ENCODE measurements at regions of chr15 and their contacts with region 1.

Region 1: DNA sequence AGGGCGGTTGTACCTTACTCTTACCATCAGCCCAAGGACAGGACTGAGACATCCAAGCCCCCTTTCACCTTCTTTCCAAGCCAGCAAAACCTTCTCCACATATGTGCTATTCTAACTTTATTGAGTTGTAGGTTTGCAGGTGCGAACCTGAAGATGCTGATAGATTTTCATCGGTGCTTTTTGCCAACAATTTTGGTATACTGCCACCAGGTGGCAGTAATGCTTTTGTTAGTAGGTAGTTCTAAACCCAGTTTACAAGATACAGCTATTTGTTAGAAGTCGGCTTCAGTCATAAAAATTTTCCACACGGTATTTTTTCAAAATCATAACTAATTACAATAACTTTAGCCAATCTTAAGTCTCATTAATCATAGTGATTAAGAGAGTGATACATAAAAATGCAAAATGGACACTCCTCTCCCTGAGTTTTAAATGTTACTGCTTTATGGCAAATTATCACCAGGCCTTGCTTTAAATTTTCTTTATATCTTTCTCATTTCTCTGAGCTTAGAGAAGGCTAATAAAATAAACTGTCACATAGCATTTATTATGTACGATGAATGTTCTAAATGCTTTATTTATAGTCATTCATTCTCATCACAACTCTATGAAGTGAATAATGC is 636 bp downstream of the TBC1D21 start:
- DNase-seq: peak; percentile 68
- ATAC-seq: 0 out of 2 replicates have a peak, but pooled peaks have one; percentile 27
- H3K4me3 ChIP-seq: no peak overlapping the region
- H3K27ac ChIP-seq: no peak overlapping the region
- H3K4me1 ChIP-seq: no peaks in the 10 kb centered on the region
- H3K27me3 ChIP-seq: peaks cover 53% of the 10 kb centered on the region
- CTCF ChIP-seq: peak; percentile 78
- POLR2A ChIP-seq: no peak
- RAD21 ChIP-seq: peak; percentile 75

Region 2: GRCh38 chr15:73908030-73908821 is 34.2 kb after region 1 on chr15:
- CTCF ChIA-PET with region 1: interaction called, 6 read pairs
- POLR2A ChIA-PET with region 1: interaction called, 3 read pairs
- dilution Hi-C with region 1: no loop called
- in situ Hi-C with region 1: loop called (anchors 5 kb)
- intact Hi-C with region 1: loop called (anchors 1 kb)
- DNase-seq: peak; percentile 64
- ATAC-seq: peak; percentile 96
- H3K4me3 ChIP-seq: no peak overlapping the region
- H3K27ac ChIP-seq: no peak overlapping the region
- H3K4me1 ChIP-seq: peaks cover 8% of the 10 kb centered on the region
- H3K27me3 ChIP-seq: no peaks in the 10 kb centered on the region
- CTCF ChIP-seq: peak; percentile 92
- POLR2A ChIP-seq: no peak
- RAD21 ChIP-seq: peak; percentile 94

Region 3: GRCh38 chr15:73936181-73936580 is 62.2 kb after region 1 on chr15:
- CTCF ChIA-PET with region 1: interaction called, 3 read pairs
- POLR2A ChIA-PET with region 1: no interaction called
- dilution Hi-C with region 1: no loop called
- in situ Hi-C with region 1: no loop called
- intact Hi-C with region 1: loop called (anchors 2 kb)
- DNase-seq: peak; percentile 83
- ATAC-seq: peak; percentile 63
- H3K4me3 ChIP-seq: no peak overlapping the region
- H3K27ac ChIP-seq: peak overlapping the region; percentile 72
- H3K4me1 ChIP-seq: peaks cover 56% of the 10 kb centered on the region
- H3K27me3 ChIP-seq: no peaks in the 10 kb centered on the region
- CTCF ChIP-seq: peak; percentile 60
- POLR2A ChIP-seq: no peak
- RAD21 ChIP-seq: peak; percentile 40